B cell (primary cell): ENCODE measurements at regions of chr1 and their contacts with region 1.

Region 1: DNA sequence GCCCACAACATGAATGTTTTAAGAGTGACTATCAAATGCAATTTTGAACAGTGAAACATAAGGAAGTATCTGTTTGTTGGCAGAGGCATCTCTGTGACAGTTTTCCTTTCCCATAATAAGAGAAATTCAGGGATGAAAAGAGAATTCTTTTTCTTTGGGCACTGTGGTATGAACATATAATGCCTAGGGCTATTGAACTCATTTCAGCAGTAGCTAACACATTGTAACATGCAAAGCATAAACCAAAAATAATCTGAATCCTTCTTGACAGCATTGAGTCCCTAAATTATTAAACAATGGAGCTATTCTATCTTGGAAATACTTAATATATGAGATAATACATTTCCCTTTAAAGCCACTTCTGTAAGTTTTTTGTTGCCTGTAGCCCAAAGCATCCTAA is 633.0 kb upstream of the B3GALT2 start:
- DNase-seq: no peak
- ATAC-seq: no peak
- H3K4me3 ChIP-seq: no peak overlapping the region
- H3K4me3 Mint-ChIP-seq: no peak overlapping the region
- H3K27ac ChIP-seq: no peak overlapping the region
- H3K27ac Mint-ChIP-seq: no peak overlapping the region
- H3K4me1 ChIP-seq: no peaks in the 10 kb centered on the region
- H3K4me1 Mint-ChIP-seq: peaks cover 2% of the 10 kb centered on the region
- H3K27me3 ChIP-seq: peaks cover 0 to 2% (median 0%) of the 10 kb centered on the region in 4 experiments
- H3K27me3 Mint-ChIP-seq: peaks cover 4% of the 10 kb centered on the region
- CTCF ChIP-seq: no peak

Region 2: DNA sequence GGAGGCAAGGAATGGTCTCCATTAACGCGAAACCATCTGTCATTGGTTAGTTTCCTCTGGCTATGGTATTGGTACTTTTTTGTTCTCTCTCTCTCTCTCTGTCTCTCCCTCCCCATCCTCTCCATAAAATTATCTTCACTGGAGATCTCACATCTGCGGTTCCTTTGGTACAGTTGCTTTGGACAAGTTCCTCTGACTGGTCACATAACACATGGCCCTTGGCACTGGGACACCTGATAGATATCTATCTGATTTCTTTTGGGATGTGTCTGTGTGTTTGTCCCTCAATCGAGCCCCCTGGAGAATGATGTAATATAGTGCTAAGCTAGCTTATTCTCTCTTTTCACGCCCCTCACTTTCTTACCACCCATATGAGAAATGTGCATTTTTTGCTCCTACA is 49.0 kb after region 1 on chr1:
- CTCF ChIA-PET with region 1: no interaction called
- POLR2A ChIA-PET with region 1: no interaction called
- intact Hi-C with region 1: loop called (anchors 1 kb)
- DNase-seq: no peak
- ATAC-seq: no peak
- H3K4me3 ChIP-seq: no peak overlapping the region
- H3K4me3 Mint-ChIP-seq: no peak overlapping the region
- H3K27ac ChIP-seq: no peak overlapping the region
- H3K27ac Mint-ChIP-seq: no peak overlapping the region
- H3K4me1 ChIP-seq: no peaks in the 10 kb centered on the region
- H3K4me1 Mint-ChIP-seq: no peaks in the 10 kb centered on the region
- H3K27me3 ChIP-seq: no peaks in the 10 kb centered on the region
- H3K27me3 Mint-ChIP-seq: peaks cover 3% of the 10 kb centered on the region
- CTCF ChIP-seq: no peak

Region 3: DNA sequence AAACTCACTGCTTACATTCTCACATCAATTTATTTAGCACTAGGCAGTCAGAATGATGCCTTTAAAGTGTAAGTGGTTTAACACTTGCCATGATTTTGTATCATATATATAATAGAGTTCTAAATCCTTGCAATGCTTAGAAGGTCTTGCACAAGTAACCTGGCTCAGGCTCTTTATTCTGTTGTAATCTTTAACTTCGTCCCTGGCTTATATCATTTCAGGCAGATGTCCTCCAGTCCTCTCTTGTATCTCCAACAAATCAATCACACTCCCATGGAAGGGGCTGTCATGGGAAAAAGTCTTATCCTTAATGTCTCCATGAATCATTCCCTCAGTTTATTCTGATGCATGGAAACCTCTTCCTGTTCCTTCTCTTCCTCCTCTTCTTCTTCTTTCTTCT is 208.6 kb after region 1 on chr1:
- CTCF ChIA-PET with region 1: no interaction called
- POLR2A ChIA-PET with region 1: no interaction called
- intact Hi-C with region 1: no loop called
- DNase-seq: no peak
- ATAC-seq: no peak
- H3K4me3 ChIP-seq: no peak overlapping the region
- H3K4me3 Mint-ChIP-seq: no peak overlapping the region
- H3K27ac ChIP-seq: no peak overlapping the region
- H3K27ac Mint-ChIP-seq: no peak overlapping the region
- H3K4me1 ChIP-seq: no peaks in the 10 kb centered on the region
- H3K4me1 Mint-ChIP-seq: no peaks in the 10 kb centered on the region
- H3K27me3 ChIP-seq: no peaks in the 10 kb centered on the region
- H3K27me3 Mint-ChIP-seq: no peaks in the 10 kb centered on the region
- CTCF ChIP-seq: no peak